ENCODE measurements at regions of chr18 and their contacts with region 1.

Region 1: DNA sequence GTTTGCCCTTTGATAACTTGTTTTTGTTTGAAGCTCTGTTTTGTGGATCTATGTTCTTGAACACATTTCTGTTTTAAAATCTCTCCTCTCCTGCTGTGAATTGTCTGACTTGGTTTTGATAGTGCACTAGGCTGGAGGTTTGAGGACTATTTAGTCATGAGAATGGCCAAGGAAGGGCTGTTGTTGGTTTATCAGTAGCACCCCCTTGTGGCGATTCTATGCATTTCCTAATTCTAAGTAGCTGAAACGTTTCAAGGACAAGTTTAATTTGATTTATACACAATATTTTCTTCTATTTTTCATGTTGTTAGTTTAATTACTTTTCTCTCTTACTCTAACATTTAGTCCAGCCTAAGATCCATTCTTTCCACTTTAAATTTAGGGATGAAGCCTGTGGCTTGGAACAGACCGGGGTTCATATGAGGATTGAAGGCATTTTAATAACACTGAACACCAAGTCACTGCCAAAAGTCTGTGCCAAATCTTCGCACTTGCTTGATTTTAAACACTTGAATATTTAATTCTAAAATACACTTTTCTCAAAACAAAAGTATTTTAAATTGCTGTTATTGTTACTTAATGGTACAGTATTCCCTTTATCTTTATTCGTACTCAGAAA is 166.0 kb downstream of the SOCS6 start:
- DNase-seq: peak; percentile 77
- H3K4me3 Mint-ChIP-seq: no peak overlapping the region
- H3K27ac Mint-ChIP-seq: no peak overlapping the region
- H3K4me1 Mint-ChIP-seq: peaks cover 2% of the 10 kb centered on the region
- H3K27me3 Mint-ChIP-seq: no peaks in the 10 kb centered on the region

Region 2: GRCh38 chr18:70195852-70196434 is 258.9 kb before region 1 on chr18:
- intact Hi-C with region 1: loop called (anchors 1 kb)
- DNase-seq: peak; percentile 72
- H3K4me3 Mint-ChIP-seq: no peak overlapping the region
- H3K27ac Mint-ChIP-seq: no peak overlapping the region
- H3K4me1 Mint-ChIP-seq: peaks cover 17% of the 10 kb centered on the region
- H3K27me3 Mint-ChIP-seq: no peaks in the 10 kb centered on the region